Thyroid gland (tissue), 4 donors: ENCODE measurements at regions of chr1 and their contacts with region 1.

Region 1: GRCh38 chr1:229363723-229364122 is 20.9 kb upstream of the CCSAP start:
- DNase-seq: no peak
- H3K4me3 ChIP-seq: no peak overlapping the region
- H3K27ac ChIP-seq: no peak overlapping the region
- H3K4me1 ChIP-seq: no peaks in the 10 kb centered on the region
- H3K27me3 ChIP-seq: peaks cover 2% of the 10 kb centered on the region
- CTCF ChIP-seq: no peak
- POLR2A ChIP-seq: no peak

Region 2: DNA sequence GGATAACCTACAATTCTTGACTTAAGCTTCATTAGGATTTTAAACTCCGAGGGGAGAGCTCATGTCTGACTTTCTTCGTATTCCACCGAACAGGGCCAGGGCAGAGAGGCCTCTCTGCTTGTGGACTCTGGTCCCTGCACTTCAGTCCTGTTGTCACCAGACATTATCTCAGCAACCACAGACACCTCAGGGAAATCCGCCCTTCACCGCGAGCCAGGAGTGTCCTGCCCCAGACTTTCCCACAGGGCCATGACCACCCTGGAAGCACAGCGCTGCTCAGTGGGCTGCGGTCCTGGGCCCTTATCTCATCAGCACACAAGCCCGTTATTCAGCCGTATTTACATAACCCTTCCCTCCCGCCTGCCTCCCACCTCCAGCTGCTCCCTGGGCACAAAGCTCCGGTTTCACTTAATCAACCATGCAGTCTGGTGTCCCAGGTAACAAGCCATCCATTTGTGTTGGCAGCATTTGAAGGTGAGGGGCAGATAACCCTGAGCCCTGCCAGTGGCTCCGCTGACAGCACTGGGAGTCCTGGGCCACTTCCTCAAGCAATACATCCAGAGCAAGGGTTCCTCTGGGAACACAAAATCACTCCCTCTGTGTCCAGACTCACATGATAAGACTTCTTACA is 215.6 kb before region 1 on chr1:
- intact Hi-C with region 1: no loop called
- DNase-seq: peak; percentile 42 to 55
- H3K4me3 ChIP-seq: no peak overlapping the region
- H3K27ac ChIP-seq: peak overlapping the region in 1 of 3 donors; percentile 28
- H3K4me1 ChIP-seq: peaks cover 18 to 25% of the 10 kb centered on the region in 2 donors
- H3K27me3 ChIP-seq: no peaks in the 10 kb centered on the region
- CTCF ChIP-seq: no peak
- POLR2A ChIP-seq: no peak

Region 3: DNA sequence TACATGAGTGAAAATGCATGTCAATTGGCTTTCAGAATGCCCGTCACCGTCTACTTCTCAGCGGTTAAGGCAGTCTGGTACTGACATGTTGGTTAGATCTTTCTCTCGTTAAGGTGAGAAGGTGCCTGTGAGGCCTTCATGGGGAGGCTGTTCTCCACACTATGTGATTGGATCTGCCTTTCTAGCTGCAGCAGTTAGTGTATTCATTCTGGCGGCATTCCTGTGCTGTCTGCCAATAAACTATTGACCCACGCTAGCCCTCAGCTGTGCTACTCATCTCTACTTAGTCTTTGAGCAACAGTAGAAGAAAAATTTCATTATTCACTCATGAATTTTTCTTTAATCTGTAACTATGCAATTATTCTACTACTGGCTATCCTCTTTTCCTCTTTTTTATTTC is 52.9 kb before region 1 on chr1:
- intact Hi-C with region 1: loop called (anchors 5 kb)
- DNase-seq: no peak
- H3K4me3 ChIP-seq: no peak overlapping the region
- H3K27ac ChIP-seq: no peak overlapping the region
- H3K4me1 ChIP-seq: no peaks in the 10 kb centered on the region
- H3K27me3 ChIP-seq: no peaks in the 10 kb centered on the region
- CTCF ChIP-seq: no peak
- POLR2A ChIP-seq: no peak

Region 4: DNA sequence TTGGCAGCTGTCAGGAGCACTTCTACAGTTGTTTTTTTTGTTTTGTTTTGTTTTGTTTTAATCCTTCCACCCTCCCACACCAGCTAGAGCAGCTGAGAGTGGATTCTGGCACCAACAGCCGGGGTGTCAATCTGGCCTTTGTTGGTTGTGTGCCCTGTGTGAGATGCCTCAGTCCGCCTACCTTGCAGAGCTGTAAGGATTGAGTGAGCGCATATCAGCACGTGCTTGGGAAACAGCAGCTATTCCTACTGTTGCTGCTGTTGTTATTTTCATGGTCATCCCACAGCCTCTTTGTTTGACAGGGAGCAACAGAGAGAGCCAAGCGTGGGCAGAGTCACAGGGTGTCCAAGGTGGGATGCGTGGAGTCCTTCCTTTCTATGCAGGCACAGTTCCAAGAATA is 1012.1 kb after region 1 on chr1:
- intact Hi-C with region 1: no loop called
- DNase-seq: peak; percentile 89
- H3K4me3 ChIP-seq: no peak overlapping the region
- H3K27ac ChIP-seq: peak overlapping the region; percentile 5 to 79 (median 14)
- H3K4me1 ChIP-seq: peaks cover 19 to 22% of the 10 kb centered on the region in 2 donors
- H3K27me3 ChIP-seq: no peaks in the 10 kb centered on the region
- CTCF ChIP-seq: no peak
- POLR2A ChIP-seq: no peak